A549 (cell line): ENCODE measurements at regions of chr12 and their contacts with region 1.

Region 1: DNA sequence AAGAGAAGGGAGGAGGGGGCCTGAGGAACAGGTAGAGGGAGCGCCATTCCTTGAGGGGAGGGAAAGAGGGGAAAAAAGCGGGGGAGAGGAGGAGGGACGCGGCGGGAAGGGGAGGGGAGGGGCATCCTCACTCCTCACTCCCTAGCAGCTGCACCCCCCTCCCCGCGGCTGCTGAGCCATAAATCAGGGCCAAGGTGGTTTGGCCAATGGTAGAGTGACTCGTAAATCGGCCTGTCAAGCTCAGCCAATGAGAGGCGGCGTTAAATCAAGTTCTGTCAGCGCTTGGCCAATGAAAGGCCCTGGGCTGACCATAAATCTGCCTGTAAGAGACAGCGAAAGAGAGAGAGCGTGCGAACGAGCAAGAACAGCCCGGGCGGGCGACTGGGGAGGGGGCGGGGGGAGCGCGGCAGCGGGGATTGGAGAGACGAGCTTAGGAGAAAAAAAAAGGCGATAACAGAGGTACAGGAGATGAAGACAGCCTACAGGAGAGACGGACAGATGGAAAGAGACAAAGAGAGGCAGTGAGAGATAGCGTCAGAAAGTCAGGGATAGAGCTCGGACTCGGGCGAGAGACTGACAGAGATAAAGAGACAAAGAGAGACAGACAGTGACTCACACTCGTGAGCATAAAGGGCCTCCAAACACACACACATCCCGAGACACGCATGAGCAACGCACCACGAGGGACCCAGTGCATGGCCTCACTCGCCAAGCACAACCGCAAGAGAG is 5.1 kb downstream of the GPR84 start:
- DNase-seq: peak; percentile 99 to 100
- ATAC-seq: peak; percentile 80 to 92
- H3K4me3 ChIP-seq: peak overlapping the region; percentile 54
- H3K27ac ChIP-seq: peak overlapping the region; percentile 81 to 91
- H3K4me1 ChIP-seq: peaks cover 28% of the 10 kb centered on the region
- CTCF ChIP-seq: no peak
- EP300 ChIP-seq: no peak
- POLR2A ChIP-seq: peak; percentile 38; the same call in 1 of the 2 replicates
- RAD21 ChIP-seq: no peak

Region 2: GRCh38 chr12:54240971-54241588 is 118.1 kb before region 1 on chr12:
- CTCF ChIA-PET with region 1: interaction called, 11 read pairs
- POLR2A ChIA-PET with region 1: no interaction called
- DNase-seq: no peak
- ATAC-seq: no peak
- H3K4me3 ChIP-seq: no peak overlapping the region
- H3K27ac ChIP-seq: no peak overlapping the region
- H3K4me1 ChIP-seq: no peaks in the 10 kb centered on the region
- CTCF ChIP-seq: no peak
- EP300 ChIP-seq: no peak
- POLR2A ChIP-seq: no peak
- RAD21 ChIP-seq: no peak

Region 3: GRCh38 chr12:54279866-54280467 is 79.2 kb before region 1 on chr12 and contains the start of gene CBX5:
- CTCF ChIA-PET with region 1: interaction called, 10 read pairs
- POLR2A ChIA-PET with region 1: interaction called, 27 read pairs
- DNase-seq: peak; percentile 98 to 100
- ATAC-seq: peak; percentile 55 to 65
- H3K4me3 ChIP-seq: peak within 1 kb of the TSS; percentile 88
- H3K27ac ChIP-seq: peak within 1 kb of the TSS; percentile 87 to 96
- H3K4me1 ChIP-seq: peaks cover 22% of the 10 kb centered on the region
- CTCF ChIP-seq: no peak
- EP300 ChIP-seq: no peak
- POLR2A ChIP-seq: peak; percentile 84
- RAD21 ChIP-seq: no peak
- polyA plus RNA-seq, gene CBX5: 115 and 129 TPM in 2 replicates

Region 4: GRCh38 chr12:54285150-54286041 is 73.8 kb before region 1 on chr12:
- CTCF ChIA-PET with region 1: interaction called, 71 read pairs
- POLR2A ChIA-PET with region 1: interaction called, 27 read pairs
- DNase-seq: no peak
- ATAC-seq: no peak
- H3K4me3 ChIP-seq: peak overlapping the region; percentile 33
- H3K27ac ChIP-seq: no peak overlapping the region
- H3K4me1 ChIP-seq: peaks cover 39% of the 10 kb centered on the region
- CTCF ChIP-seq: peak; percentile 27
- EP300 ChIP-seq: no peak
- POLR2A ChIP-seq: no peak
- RAD21 ChIP-seq: no peak

Region 5: GRCh38 chr12:54294152-54294952 is 64.8 kb before region 1 on chr12:
- CTCF ChIA-PET with region 1: interaction called, 71 read pairs
- POLR2A ChIA-PET with region 1: no interaction called
- DNase-seq: peak; percentile 68 to 83
- ATAC-seq: peak; percentile 31 to 51; a peak in 4 of 6 replicates
- H3K4me3 ChIP-seq: no peak overlapping the region
- H3K27ac ChIP-seq: no peak overlapping the region
- H3K4me1 ChIP-seq: no peaks in the 10 kb centered on the region
- CTCF ChIP-seq: peak; percentile 67
- EP300 ChIP-seq: no peak
- POLR2A ChIP-seq: no peak
- RAD21 ChIP-seq: peak; percentile 64 to 82

Region 6: DNA sequence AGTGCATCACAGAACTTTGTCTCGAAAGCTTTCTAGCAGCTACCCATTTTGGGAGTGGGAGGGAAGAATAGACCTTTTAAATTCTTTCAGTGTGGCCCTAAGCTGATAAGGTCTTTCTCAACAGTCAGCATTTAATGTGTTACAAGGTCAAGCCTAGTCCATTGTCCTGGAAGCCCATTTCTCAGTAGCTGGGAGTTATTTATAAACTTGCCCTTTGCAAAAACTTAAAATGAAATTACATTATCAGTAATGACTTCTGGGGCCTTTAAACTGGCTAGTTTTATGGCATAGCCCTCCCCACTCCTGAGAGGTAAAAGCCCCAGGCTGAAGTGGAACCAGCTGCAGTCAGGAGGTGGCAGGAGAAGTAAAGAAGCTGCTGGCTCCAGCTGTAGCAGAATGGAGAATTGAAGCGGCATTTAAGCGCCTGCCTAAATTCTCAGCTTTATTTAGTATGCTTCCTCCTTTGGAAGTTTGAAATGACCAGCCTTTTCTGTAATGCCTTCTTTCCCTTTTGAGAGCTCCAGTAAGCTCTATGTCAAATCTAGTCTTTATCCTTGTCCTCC is 21.8 kb before region 1 on chr12:
- CTCF ChIA-PET with region 1: interaction called, 125 read pairs
- POLR2A ChIA-PET with region 1: interaction called, 8 read pairs
- DNase-seq: no peak
- ATAC-seq: no peak
- H3K4me3 ChIP-seq: no peak overlapping the region
- H3K27ac ChIP-seq: no peak overlapping the region
- H3K4me1 ChIP-seq: 0 out of 3 replicates have a peak, but pooled peaks cover 2% of the 10 kb centered on the region
- CTCF ChIP-seq: no peak
- EP300 ChIP-seq: no peak
- POLR2A ChIP-seq: no peak
- RAD21 ChIP-seq: no peak

Region 7: DNA sequence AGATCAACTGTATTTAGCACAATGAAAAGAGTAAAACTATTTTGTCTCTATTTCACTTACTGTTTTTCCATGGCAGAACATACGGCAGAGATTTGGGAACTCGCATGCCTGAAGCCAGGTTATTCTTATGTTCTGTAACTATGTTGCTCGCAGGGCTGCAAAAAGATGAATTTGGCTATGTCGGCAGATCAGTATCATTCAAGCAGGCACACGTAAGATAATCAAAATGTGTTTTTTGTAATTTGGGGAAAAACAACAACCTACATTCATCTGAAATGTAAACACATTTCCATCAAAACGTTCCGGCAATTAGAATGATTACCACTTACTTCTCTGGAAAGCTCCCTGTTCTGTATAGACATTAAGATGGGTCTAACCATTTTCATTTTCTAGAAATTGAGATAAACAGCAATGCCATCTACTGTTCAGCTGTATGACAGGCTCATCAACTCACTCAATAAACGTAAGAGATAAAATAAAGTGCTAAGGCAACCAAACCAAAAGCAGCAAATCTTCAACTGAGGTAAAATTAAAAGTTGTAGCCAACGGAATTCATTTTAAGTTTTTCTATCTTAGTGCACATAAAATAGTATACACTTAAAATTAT is 101.2 kb after region 1 on chr12:
- CTCF ChIA-PET with region 1: no interaction called
- POLR2A ChIA-PET with region 1: no interaction called
- DNase-seq: no peak
- ATAC-seq: no peak
- H3K4me3 ChIP-seq: no peak overlapping the region
- H3K27ac ChIP-seq: no peak overlapping the region
- H3K4me1 ChIP-seq: no peaks in the 10 kb centered on the region
- CTCF ChIP-seq: no peak
- EP300 ChIP-seq: no peak
- POLR2A ChIP-seq: no peak
- RAD21 ChIP-seq: peak in 1 of 2 experiments; percentile 26; a peak in 1 of 5 replicates

Region 8: GRCh38 chr12:54958048-54958658 is 599.0 kb after region 1 on chr12:
- CTCF ChIA-PET with region 1: no interaction called
- POLR2A ChIA-PET with region 1: no interaction called
- DNase-seq: peak; percentile 22 to 75
- ATAC-seq: peak; percentile 69 to 89; a peak in 5 of 6 replicates
- H3K4me3 ChIP-seq: no peak overlapping the region
- H3K27ac ChIP-seq: no peak overlapping the region
- H3K4me1 ChIP-seq: no peaks in the 10 kb centered on the region
- CTCF ChIP-seq: peak; percentile 88
- EP300 ChIP-seq: no peak
- POLR2A ChIP-seq: no peak
- RAD21 ChIP-seq: peak; percentile 96